ENCODE measurements at regions of chr1 and their contacts with region 1.

Region 1: DNA sequence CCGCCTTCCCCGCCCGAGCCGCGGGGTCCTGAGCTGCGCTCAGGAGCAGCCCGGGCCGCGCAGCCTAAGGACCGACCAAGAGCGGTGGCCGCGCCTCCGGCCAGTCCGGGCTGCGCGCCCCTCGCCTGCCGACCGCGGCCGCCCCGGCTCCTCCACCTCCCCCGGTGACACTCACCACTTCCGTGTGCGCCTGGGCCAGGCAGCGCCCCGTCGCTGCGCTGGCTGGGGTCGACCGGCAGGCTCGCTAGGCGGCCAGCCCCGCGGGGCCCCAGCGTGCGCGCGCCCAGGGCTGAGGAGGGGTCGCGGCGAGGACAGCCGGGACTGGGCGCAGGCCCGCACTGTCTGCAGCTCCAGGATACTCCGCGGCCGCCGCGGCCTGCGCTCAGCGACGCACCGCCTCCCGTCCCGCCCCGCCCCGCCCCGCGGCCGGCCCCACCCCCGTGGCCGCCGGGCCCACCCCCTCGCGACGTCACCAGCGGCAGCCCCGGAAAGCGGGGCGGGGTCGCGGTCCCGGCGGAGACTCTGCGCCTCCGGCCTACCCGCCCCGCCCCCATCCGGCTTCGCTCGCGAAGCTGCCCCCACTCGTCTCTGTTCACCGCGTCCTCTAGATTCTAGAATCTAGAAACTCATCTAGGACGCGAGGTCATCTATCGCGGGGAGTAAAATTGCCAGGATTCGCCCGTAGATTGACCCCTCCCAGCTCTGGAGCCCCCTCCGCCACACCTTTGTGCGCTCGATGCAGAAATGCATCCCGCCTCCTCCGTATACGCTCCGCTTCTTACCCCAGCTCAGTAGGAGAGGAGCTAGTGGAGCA is at the start of gene JAK1:
- DNase-seq: peak; percentile 89
- H3K4me3 ChIP-seq: peak within 1 kb of the TSS; percentile 74
- H3K27ac ChIP-seq: peak within 1 kb of the TSS; percentile 95
- H3K4me1 ChIP-seq: no peaks in the 10 kb centered on the region
- H3K27me3 ChIP-seq: no peaks in the 10 kb centered on the region
- CTCF ChIP-seq: no peak
- total RNA-seq, gene JAK1: 73.2 to 101 TPM

Region 2: GRCh38 chr1:64917328-64917861 is 49.0 kb before region 1 on chr1:
- intact Hi-C with region 1: loop called (anchors 10 kb)
- DNase-seq: peak; percentile 34
- H3K4me3 ChIP-seq: no peak overlapping the region
- H3K27ac ChIP-seq: no peak overlapping the region
- H3K4me1 ChIP-seq: peaks cover 8% of the 10 kb centered on the region
- H3K27me3 ChIP-seq: no peaks in the 10 kb centered on the region
- CTCF ChIP-seq: no peak